ENCODE measurements at regions of chr18 and their contacts with region 1.

Region 1: GRCh38 chr18:32552421-32553030 is 81.8 kb upstream of the GAREM1 start:
- DNase-seq: peak; percentile 39 to 46
- ATAC-seq: peak; percentile 81 to 84
- H3K4me3 ChIP-seq: no peak overlapping the region
- H3K27ac ChIP-seq: no peak overlapping the region
- H3K4me1 ChIP-seq: no peaks in the 10 kb centered on the region
- H3K27me3 ChIP-seq: no peaks in the 10 kb centered on the region
- CTCF ChIP-seq: peak; percentile 61 to 81 (median 75)
- POLR2A ChIP-seq: no peak

Region 2: GRCh38 chr18:32158108-32158624 is 394.4 kb before region 1 on chr18:
- in situ Hi-C with region 1: loop called (anchors 5 kb)
- intact Hi-C with region 1: loop called (anchors 1 kb)
- DNase-seq: peak; percentile 61 to 62
- ATAC-seq: peak; percentile 98
- H3K4me3 ChIP-seq: peak overlapping the region in 3 of 4 donors; percentile 34 to 42 (median 34)
- H3K27ac ChIP-seq: no peak overlapping the region
- H3K4me1 ChIP-seq: no peaks in the 10 kb centered on the region
- H3K27me3 ChIP-seq: no peaks in the 10 kb centered on the region
- CTCF ChIP-seq: peak; percentile 73 to 86 (median 81)
- POLR2A ChIP-seq: no peak

Region 3: GRCh38 chr18:32261003-32261402 is 291.5 kb before region 1 on chr18:
- in situ Hi-C with region 1: loop called in 2 of 4 experiments (anchors 10 kb)
- intact Hi-C with region 1: no loop called
- DNase-seq: no peak
- ATAC-seq: no peak
- H3K4me3 ChIP-seq: no peak overlapping the region
- H3K27ac ChIP-seq: no peak overlapping the region
- H3K4me1 ChIP-seq: no peaks in the 10 kb centered on the region
- H3K27me3 ChIP-seq: no peaks in the 10 kb centered on the region
- CTCF ChIP-seq: no peak
- POLR2A ChIP-seq: no peak

Region 4: GRCh38 chr18:32271672-32272208 is 280.8 kb before region 1 on chr18:
- in situ Hi-C with region 1: loop called (anchors 10 kb)
- intact Hi-C with region 1: loop called (anchors 2 kb)
- DNase-seq: no peak
- ATAC-seq: peak; percentile 64 to 72
- H3K4me3 ChIP-seq: no peak overlapping the region
- H3K27ac ChIP-seq: no peak overlapping the region
- H3K4me1 ChIP-seq: no peaks in the 10 kb centered on the region
- H3K27me3 ChIP-seq: no peaks in the 10 kb centered on the region
- CTCF ChIP-seq: peak in 4 of 5 experiments; percentile 56 to 71 (median 64)
- POLR2A ChIP-seq: no peak

Region 5: GRCh38 chr18:32418148-32418547 is 134.4 kb before region 1 on chr18:
- in situ Hi-C with region 1: no loop called
- intact Hi-C with region 1: no loop called
- DNase-seq: no peak
- ATAC-seq: no peak
- H3K4me3 ChIP-seq: no peak overlapping the region
- H3K27ac ChIP-seq: no peak overlapping the region
- H3K4me1 ChIP-seq: peaks cover 34 to 39% of the 10 kb centered on the region in 2 donors
- H3K27me3 ChIP-seq: no peaks in the 10 kb centered on the region
- CTCF ChIP-seq: no peak
- POLR2A ChIP-seq: no peak